ENCODE measurements at regions of chr2 and their contacts with region 1.

Region 1: GRCh38 chr2:128187032-128187654 is 96.1 kb downstream of the UGGT1 start:
- DNase-seq: no peak
- ATAC-seq: peak in 3 of 4 donors; percentile 27 to 58 (median 56)
- H3K4me3 ChIP-seq: peak overlapping the region in 7 of 12 donors; percentile 0 to 39 (median 6)
- H3K27ac ChIP-seq: peak overlapping the region in 10 of 12 donors; percentile 15 to 82 (median 44)
- H3K4me1 ChIP-seq: peaks cover 0 to 18% (median 5%) of the 10 kb centered on the region in 12 donors
- H3K27me3 ChIP-seq: no peaks in the 10 kb centered on the region
- CTCF ChIP-seq: no peak
- POLR2A ChIP-seq: no peak

Region 2: GRCh38 chr2:128305159-128306087 is 118.3 kb after region 1 on chr2:
- intact Hi-C with region 1: loop called in 6 of 10 experiments (anchors 5 to 10 kb)
- DNase-seq: peak; percentile 71 to 90 (median 83)
- ATAC-seq: peak; percentile 63 to 78 (median 70)
- H3K4me3 ChIP-seq: no peak overlapping the region
- H3K27ac ChIP-seq: peak overlapping the region in 10 of 12 donors; percentile 20 to 83 (median 60)
- H3K4me1 ChIP-seq: peaks cover 12 to 67% (median 50%) of the 10 kb centered on the region in 12 donors
- H3K27me3 ChIP-seq: no peaks in the 10 kb centered on the region
- CTCF ChIP-seq: peak in 1 of 12 donors; percentile 16
- POLR2A ChIP-seq: no peak